Colonic mucosa (tissue), 4 donors: ENCODE measurements at regions of chr12 and their contacts with region 1.

Region 1: GRCh38 chr12:120445911-120446843 is at the starts of genes GATC and TRIAP1:
- DNase-seq: peak; percentile 90
- H3K4me3 ChIP-seq: peak within 1 kb of the TSS; percentile 98
- H3K27ac ChIP-seq: peak within 1 kb of the TSS; percentile 91
- H3K4me1 ChIP-seq: peaks cover 10% of the 10 kb centered on the region
- H3K27me3 ChIP-seq: no peaks in the 10 kb centered on the region
- CTCF ChIP-seq: no peak
- total RNA-seq, gene GATC: 34.1 to 43.3 TPM
- total RNA-seq, gene TRIAP1: 20.4 to 27.8 TPM

Region 2: GRCh38 chr12:120571299-120571698 is 125.1 kb after region 1 on chr12:
- intact Hi-C with region 1: loop called (anchors 10 kb)
- DNase-seq: no peak
- H3K4me3 ChIP-seq: no peak overlapping the region
- H3K27ac ChIP-seq: no peak overlapping the region
- H3K4me1 ChIP-seq: no peaks in the 10 kb centered on the region
- H3K27me3 ChIP-seq: no peaks in the 10 kb centered on the region
- CTCF ChIP-seq: no peak